Heart left ventricle (tissue), 16 donors: ENCODE measurements at regions of chr2 and their contacts with region 1.

Region 1: GRCh38 chr2:168968342-168968741 is 62.8 kb downstream of the ABCB11 start:
- DNase-seq: no peak
- ATAC-seq: no peak
- H3K4me3 ChIP-seq: no peak overlapping the region
- H3K27ac ChIP-seq: no peak overlapping the region
- H3K4me1 ChIP-seq: peaks cover 0 to 10% (median 0%) of the 10 kb centered on the region in 12 donors
- H3K27me3 ChIP-seq: no peaks in the 10 kb centered on the region
- CTCF ChIP-seq: no peak
- POLR2A ChIP-seq: no peak

Region 2: DNA sequence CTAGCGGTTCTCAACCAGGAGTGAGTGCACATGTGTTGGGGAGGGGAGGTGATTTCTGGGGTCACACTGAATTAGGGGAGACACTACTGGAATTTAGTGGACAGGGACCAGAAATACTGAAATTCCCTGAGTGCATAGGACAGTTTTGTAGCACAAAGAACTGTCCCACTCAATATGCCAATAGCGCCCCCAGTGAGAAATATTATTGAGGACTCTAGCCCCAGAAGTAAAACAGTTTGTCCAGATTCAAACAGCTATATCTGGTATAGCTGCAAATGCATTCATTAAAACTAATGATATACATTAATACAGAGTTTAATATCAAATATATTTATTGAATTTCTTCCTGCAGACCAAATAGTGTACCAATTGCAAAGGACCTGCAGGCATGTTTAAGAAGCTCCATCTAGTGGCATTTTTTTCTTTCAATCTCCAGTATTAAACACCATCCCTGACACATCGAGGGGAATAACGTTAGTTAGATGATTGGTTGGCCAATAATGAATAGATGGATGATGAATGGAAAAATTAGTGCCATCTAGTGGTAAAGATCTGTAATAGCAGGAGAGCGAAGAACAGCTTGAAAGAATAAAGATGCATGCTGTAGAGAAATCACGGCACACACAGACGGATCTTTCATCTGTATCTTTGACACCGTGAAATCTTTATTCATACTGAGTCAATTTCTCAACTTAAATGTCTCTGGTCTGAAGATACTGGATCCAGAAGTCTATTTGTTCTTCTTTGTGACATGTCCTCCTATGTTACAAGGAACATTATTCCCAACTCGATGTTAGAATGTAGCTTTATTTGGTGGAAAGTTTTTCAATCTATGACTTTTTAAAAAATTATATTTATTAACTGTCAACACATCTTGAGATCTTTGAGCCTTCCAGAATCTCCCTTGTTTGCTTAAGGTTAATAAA is 163.5 kb after region 1 on chr2:
- intact Hi-C with region 1: loop called in 4 of 10 experiments (anchors 5 kb)
- DNase-seq: no peak
- ATAC-seq: peak in 2 of 4 donors; percentile 20 to 45
- H3K4me3 ChIP-seq: no peak overlapping the region
- H3K27ac ChIP-seq: no peak overlapping the region
- H3K4me1 ChIP-seq: peaks cover 0 to 7% (median 0%) of the 10 kb centered on the region in 12 donors
- H3K27me3 ChIP-seq: no peaks in the 10 kb centered on the region
- CTCF ChIP-seq: peak; percentile 71 to 90 (median 82)
- POLR2A ChIP-seq: no peak